Heart left ventricle (tissue), 16 donors: ENCODE measurements at regions of chr18 and their contacts with region 1.

Region 1: GRCh38 chr18:33866386-33866785 is 288.4 kb downstream of the ASXL3 start:
- DNase-seq: no peak
- ATAC-seq: no peak
- H3K4me3 ChIP-seq: no peak overlapping the region
- H3K27ac ChIP-seq: no peak overlapping the region
- H3K4me1 ChIP-seq: peaks cover 0 to 3% (median 0%) of the 10 kb centered on the region in 12 donors
- H3K27me3 ChIP-seq: no peaks in the 10 kb centered on the region
- CTCF ChIP-seq: no peak
- POLR2A ChIP-seq: no peak

Region 2: GRCh38 chr18:33928226-33928625 is 61.8 kb after region 1 on chr18:
- intact Hi-C with region 1: loop called in 1 of 10 experiments (anchors 10 kb)
- DNase-seq: no peak
- ATAC-seq: no peak
- H3K4me3 ChIP-seq: no peak overlapping the region
- H3K27ac ChIP-seq: no peak overlapping the region
- H3K4me1 ChIP-seq: no peaks in the 10 kb centered on the region
- H3K27me3 ChIP-seq: no peaks in the 10 kb centered on the region
- CTCF ChIP-seq: no peak
- POLR2A ChIP-seq: no peak